Cardiac septum (tissue), 1 donor: ENCODE measurements at regions of chr1 and their contacts with region 1.

Region 1: DNA sequence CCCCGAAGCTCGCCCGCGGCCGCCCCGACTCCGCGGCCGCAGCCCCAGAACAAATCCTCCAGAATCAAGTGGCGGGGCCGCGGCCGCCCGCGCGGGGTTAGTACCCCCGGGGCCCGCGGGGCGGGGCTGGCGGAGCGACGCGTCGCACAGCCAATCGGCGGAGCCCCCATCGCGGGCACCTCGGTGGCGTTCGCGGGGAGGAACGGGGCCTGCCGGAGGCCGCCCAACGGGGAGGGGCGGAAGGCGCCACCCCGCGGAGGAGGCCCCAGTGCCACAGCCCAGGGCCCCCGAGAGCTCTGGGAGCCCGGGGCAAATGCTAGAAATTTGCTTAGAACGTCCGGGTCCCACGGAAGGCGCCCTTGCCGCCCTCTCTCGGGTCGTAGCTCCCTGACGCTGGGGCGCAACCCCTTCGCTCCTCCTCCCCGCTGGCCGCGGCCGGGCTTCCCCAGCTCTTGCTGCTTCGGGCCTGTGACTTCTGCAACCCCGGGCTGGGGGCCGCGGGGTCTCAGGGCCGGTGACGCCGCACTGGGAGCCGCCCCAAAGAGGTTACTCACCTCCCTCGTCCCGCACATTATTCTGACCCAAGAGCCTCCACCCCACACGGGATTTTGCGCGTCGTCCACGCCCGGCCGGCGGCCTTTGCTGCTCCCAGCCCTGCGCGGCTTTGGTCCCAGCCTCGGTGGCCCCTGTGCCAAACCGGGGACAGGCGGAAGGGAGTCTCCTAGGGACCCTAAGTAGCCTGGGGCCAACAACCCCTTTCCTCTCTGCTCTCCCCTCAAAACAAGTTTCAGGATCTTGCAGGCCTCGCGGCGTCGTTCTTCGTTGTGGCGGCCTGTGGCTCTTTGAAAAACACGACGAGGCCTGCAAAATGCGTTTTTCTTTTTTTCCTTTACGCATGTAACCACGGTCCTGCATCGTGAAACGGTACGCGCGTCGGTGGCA is at the start of gene RUNX3:
- DNase-seq: peak; percentile 87
- total RNA-seq, gene RUNX3: 0.51 TPM

Region 2: DNA sequence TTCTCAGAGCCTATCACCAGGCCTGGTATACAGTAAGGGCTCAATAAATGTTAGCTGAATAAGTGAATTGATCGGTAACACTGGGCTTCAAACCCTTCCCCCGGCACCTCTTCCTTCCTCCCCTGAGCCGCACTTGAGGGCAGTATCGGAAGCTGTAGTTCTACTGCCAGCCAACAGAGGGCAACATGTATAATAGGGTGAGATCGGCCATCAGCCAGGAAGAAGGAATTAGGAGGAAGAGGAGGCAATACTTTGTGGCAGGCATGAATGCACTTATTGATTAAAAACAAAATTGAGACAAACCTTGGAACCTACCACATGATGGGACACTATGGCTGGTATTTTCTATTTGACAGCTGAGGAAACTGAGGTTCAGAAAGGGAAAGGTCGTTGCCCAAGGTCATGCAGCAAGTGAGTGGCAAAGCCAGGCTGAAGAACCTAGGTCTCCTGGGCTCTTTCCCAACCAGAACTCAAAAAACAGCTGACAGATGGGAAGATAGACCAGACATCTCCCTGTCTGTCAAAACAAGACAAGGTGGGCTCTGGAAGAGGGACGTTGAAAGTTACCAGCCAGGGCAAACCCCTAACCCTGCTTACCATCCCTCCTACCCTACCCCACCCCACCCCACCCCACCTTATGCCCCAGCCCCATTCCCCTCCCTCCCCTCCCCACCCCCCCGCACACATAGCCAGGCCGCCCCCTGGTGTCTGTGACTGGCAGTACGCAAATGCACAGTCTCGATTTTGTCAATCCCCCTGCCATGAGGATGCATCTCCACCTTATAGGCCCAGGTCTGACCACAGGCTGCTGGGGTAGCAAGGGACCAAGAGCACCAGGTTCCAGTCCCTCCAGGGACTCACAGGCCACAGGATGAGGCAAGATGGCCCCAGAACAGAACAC is 106.9 kb after region 1 on chr1:
- intact Hi-C with region 1: loop called (anchors 5 kb)
- DNase-seq: no peak

Region 3: GRCh38 chr1:25103164-25103795 is 172.8 kb after region 1 on chr1:
- intact Hi-C with region 1: loop called (anchors 2 kb)
- DNase-seq: no peak

Region 4: GRCh38 chr1:25204797-25205480 is 274.5 kb after region 1 on chr1:
- intact Hi-C with region 1: loop called (anchors 5 kb)
- DNase-seq: no peak